CD4-positive, alpha-beta memory T cell (primary cell): ENCODE measurements at regions of chr16 and their contacts with region 1.

Region 1: DNA sequence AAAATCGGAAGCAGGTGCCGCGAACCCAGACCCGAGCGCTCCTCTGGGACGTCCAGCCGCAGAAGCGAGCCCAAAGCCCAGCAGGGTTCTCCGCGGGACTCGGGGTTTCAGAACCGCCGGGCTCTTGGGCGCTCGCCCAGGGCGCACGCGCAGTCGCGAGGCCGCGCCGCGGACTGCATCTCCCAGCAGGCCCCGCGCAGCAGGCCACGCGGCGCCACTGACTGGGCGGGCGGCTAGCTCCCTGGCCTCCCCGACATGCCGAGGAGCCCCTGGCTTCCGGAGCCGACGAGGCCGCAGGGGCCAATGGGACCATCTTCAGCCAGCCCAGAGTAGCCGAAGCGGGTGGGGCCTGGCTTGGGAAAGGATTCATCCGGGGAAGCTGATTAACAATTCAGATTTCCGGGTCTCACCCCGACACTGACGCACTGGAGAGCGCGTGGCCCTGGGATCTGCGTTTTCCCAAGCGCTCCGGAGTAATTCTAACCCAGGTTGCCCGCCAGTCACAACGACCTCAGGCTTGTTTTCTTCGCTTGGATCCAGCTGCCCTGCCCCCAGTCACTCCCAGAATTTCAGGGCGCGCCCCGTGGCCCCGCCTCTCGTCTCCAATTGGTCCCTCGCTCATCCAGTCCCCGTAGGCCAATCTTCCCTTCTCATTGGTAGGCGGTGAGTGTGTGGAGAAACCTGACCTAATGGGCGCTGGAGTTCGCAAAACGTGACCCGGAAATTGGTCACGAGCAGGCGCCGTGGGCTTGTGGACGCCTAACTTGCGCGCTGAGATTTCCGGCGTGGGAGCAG is at the start of gene ZNF263:
- DNase-seq: peak; percentile 92 to 97 (median 95)
- H3K4me3 ChIP-seq: peak within 1 kb of the TSS; percentile 66 to 68
- H3K4me3 Mint-ChIP-seq: peak within 1 kb of the TSS; percentile 93 to 97 (median 95)
- H3K27ac ChIP-seq: peak within 1 kb of the TSS; percentile 87
- H3K27ac Mint-ChIP-seq: peak within 1 kb of the TSS; percentile 93 to 99 (median 98)
- H3K4me1 ChIP-seq: peaks cover 27% of the 10 kb centered on the region
- H3K4me1 Mint-ChIP-seq: peaks cover 18 to 45% (median 30%) of the 10 kb centered on the region in 4 donors
- H3K27me3 ChIP-seq: no peaks in the 10 kb centered on the region
- H3K27me3 Mint-ChIP-seq: no peaks in the 10 kb centered on the region
- total RNA-seq, gene ZNF263: 44.0 to 45.1 TPM

Region 2: GRCh38 chr16:2673066-2673999 is 609.6 kb before region 1 on chr16:
- CTCF ChIA-PET with region 1: no interaction called
- POLR2A ChIA-PET with region 1: no interaction called
- intact Hi-C with region 1: no loop called
- DNase-seq: peak; percentile 94 to 98 (median 97)
- H3K4me3 ChIP-seq: peak overlapping the region; percentile 70 to 81
- H3K4me3 Mint-ChIP-seq: peak overlapping the region; percentile 84 to 90 (median 88)
- H3K27ac ChIP-seq: peak overlapping the region; percentile 80
- H3K27ac Mint-ChIP-seq: peak overlapping the region; percentile 82 to 92 (median 87)
- H3K4me1 ChIP-seq: peaks cover 21% of the 10 kb centered on the region
- H3K4me1 Mint-ChIP-seq: peaks cover 14 to 49% (median 26%) of the 10 kb centered on the region in 4 donors
- H3K27me3 ChIP-seq: no peaks in the 10 kb centered on the region
- H3K27me3 Mint-ChIP-seq: no peaks in the 10 kb centered on the region

Region 3: GRCh38 chr16:3158471-3159314 is 124.2 kb before region 1 on chr16:
- CTCF ChIA-PET with region 1: no interaction called
- POLR2A ChIA-PET with region 1: interaction called, 12 read pairs
- intact Hi-C with region 1: no loop called
- DNase-seq: peak; percentile 92 to 98 (median 94)
- H3K4me3 ChIP-seq: peak overlapping the region; percentile 65 to 66
- H3K4me3 Mint-ChIP-seq: peak overlapping the region; percentile 83 to 96 (median 92)
- H3K27ac ChIP-seq: peak overlapping the region; percentile 62
- H3K27ac Mint-ChIP-seq: peak overlapping the region; percentile 92 to 100 (median 96)
- H3K4me1 ChIP-seq: peaks cover 25% of the 10 kb centered on the region
- H3K4me1 Mint-ChIP-seq: peaks cover 11 to 36% (median 25%) of the 10 kb centered on the region in 4 donors
- H3K27me3 ChIP-seq: no peaks in the 10 kb centered on the region
- H3K27me3 Mint-ChIP-seq: peaks cover 0 to 2% of the 10 kb centered on the region in 2 donors

Region 4: DNA sequence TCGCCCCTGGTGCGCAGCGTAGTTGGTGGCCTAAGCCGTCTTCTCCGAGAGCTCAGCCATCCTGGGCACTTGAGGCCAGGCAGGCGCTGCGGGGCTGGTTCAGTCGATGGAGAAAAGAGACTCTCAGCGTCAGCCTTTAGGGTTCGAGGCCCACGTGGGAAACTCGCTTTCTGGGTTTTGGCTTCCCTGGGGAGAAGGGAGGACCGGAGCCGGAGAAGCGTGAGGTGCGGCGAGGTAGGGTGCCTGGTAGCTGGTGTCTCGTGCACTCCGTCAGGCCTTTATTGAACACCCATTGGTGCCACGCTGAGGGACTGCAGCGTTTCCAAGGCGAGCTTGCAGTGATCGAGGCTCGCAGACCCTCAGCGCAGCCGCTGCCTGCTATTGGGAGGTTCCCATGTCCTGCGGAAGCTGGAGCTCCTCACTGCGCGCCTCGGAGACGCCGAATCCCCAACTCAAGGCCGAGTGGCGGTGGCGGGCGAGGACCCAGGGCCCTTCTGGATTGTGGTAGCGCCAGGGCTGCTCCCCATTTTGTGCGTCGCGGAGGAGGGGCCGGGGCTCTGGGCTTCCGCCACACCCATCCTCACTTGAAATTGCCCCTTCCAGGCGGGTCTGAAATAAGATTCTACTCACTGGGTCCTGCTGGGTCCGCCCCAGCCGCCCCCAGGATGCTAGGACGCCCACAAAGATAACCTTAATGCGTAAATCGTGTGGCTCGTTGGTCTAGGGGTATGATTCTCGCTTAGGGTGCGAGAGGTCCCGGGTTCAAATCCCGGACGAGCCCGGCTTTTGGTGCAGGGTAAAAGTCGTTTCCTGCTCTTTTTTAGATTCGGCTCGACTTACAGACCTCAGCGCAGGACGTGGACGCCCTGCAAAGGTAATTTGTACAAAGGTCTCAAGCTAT is 93.8 kb before region 1 on chr16:
- CTCF ChIA-PET with region 1: no interaction called
- POLR2A ChIA-PET with region 1: interaction called, 10 read pairs
- intact Hi-C with region 1: loop called (anchors 5 kb)
- DNase-seq: peak in 3 of 5 donors; percentile 44 to 45 (median 44)
- H3K4me3 ChIP-seq: peak overlapping the region; percentile 23 to 44
- H3K4me3 Mint-ChIP-seq: peak overlapping the region; percentile 48 to 84 (median 82)
- H3K27ac ChIP-seq: no peak overlapping the region
- H3K27ac Mint-ChIP-seq: peak overlapping the region; percentile 42 to 90 (median 54)
- H3K4me1 ChIP-seq: peaks cover 44% of the 10 kb centered on the region
- H3K4me1 Mint-ChIP-seq: peaks cover 18 to 49% (median 32%) of the 10 kb centered on the region in 4 donors
- H3K27me3 ChIP-seq: peaks cover 58% of the 10 kb centered on the region
- H3K27me3 Mint-ChIP-seq: peaks cover 45 to 51% of the 10 kb centered on the region in 2 donors

Region 5: DNA sequence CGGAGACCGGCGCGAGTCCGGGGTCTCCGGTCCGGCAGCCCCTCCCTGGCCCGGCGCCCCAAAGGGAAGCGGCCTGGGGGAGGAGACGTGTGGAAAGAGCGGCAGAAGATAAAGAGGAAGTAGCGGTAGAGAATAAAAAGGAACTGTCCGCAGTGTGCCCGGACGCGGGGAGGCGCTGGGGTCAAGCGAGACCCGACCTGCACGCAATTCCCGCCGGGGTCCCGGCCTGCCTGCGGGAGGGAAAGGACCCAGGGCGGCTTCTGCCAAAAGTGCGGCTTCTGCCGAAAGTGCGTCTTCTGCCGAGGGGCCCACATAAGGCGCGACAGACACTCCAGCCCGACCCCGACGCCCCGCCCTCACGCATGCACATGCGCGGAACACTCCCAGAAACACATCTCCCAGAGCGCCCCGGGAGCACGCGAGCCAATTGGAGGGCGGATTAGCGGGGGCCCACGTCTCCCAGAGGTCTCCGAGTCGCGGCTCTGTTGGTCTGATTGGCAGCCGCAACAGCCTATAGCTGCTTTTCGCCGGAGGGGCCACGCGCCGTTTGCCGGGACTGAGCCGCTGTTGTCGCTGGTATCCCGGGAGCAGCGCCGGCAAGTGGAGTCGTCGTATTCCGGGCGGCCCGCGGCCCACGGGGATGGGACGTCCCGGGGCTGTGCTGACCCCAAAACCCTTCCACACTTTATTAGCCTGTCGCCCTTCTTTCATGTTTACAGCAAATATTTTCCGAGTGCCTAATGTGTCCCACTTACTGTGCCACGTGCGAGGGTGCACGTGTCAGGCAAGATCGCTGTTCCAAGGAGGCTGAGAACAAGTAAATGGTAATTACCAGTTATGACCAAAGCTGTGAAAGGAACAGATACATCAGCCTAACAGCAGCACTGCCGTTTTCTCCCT is 18.5 kb before region 1 on chr16:
- CTCF ChIA-PET with region 1: interaction called, 14 read pairs
- POLR2A ChIA-PET with region 1: interaction called, 80 read pairs
- intact Hi-C with region 1: loop called (anchors 1 kb)
- DNase-seq: peak; percentile 93 to 96 (median 95)
- H3K4me3 ChIP-seq: peak overlapping the region; percentile 12 to 95
- H3K4me3 Mint-ChIP-seq: peak overlapping the region; percentile 88 to 98 (median 90)
- H3K27ac ChIP-seq: peak overlapping the region; percentile 92
- H3K27ac Mint-ChIP-seq: peak overlapping the region; percentile 90 to 96 (median 93)
- H3K4me1 ChIP-seq: peaks cover 25% of the 10 kb centered on the region
- H3K4me1 Mint-ChIP-seq: peaks cover 23 to 46% (median 33%) of the 10 kb centered on the region in 4 donors
- H3K27me3 ChIP-seq: no peaks in the 10 kb centered on the region
- H3K27me3 Mint-ChIP-seq: no peaks in the 10 kb centered on the region

Region 6: GRCh38 chr16:3400779-3401688 is 118.1 kb after region 1 on chr16 and contains the starts of genes ZNF174 and ZSCAN32:
- CTCF ChIA-PET with region 1: no interaction called
- POLR2A ChIA-PET with region 1: interaction called, 66 read pairs
- intact Hi-C with region 1: loop called (anchors 1 kb)
- DNase-seq: peak; percentile 98 to 99 (median 99)
- H3K4me3 ChIP-seq: peak within 1 kb of the TSS; percentile 72 to 79
- H3K4me3 Mint-ChIP-seq: peak within 1 kb of the TSS; percentile 90 to 98 (median 94)
- H3K27ac ChIP-seq: peak within 1 kb of the TSS; percentile 69
- H3K27ac Mint-ChIP-seq: peak within 1 kb of the TSS; percentile 85 to 95 (median 90)
- H3K4me1 ChIP-seq: peaks cover 34% of the 10 kb centered on the region
- H3K4me1 Mint-ChIP-seq: peaks cover 36 to 68% (median 52%) of the 10 kb centered on the region in 4 donors
- H3K27me3 ChIP-seq: no peaks in the 10 kb centered on the region
- H3K27me3 Mint-ChIP-seq: no peaks in the 10 kb centered on the region
- total RNA-seq, gene ZNF174: 17.9 to 18.0 TPM
- total RNA-seq, gene ZSCAN32: 26.8 to 28.8 TPM

Region 7: DNA sequence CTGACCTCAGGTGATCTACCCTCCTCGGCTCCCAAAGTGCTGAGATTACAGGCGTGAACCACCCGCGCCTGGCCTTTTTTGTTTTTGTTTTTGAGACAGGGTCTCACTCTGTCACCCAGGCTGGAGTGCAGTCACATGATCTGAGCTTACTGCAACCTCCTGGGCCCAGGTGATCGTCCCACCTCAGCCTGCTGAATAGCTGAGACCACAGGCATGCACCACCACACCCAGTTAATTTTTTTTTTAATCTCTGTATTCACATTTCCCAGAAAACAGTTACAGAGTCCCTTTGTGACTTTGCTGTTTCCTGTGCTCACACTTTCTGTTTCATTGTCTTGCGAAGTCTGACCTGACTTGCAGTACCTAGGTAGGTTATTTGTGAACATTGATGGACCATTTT is 220.6 kb after region 1 on chr16:
- CTCF ChIA-PET with region 1: no interaction called
- POLR2A ChIA-PET with region 1: interaction called, 10 read pairs
- intact Hi-C with region 1: loop called (anchors 1 kb)
- DNase-seq: peak; percentile 61 to 76 (median 67)
- H3K4me3 ChIP-seq: peak overlapping the region in 1 of 2 donors; percentile 12
- H3K4me3 Mint-ChIP-seq: peak overlapping the region; percentile 68 to 84 (median 79)
- H3K27ac ChIP-seq: peak overlapping the region; percentile 4
- H3K27ac Mint-ChIP-seq: peak overlapping the region; percentile 88 to 95 (median 93)
- H3K4me1 ChIP-seq: peaks cover 65% of the 10 kb centered on the region
- H3K4me1 Mint-ChIP-seq: peaks cover 45 to 74% (median 55%) of the 10 kb centered on the region in 4 donors
- H3K27me3 ChIP-seq: no peaks in the 10 kb centered on the region
- H3K27me3 Mint-ChIP-seq: no peaks in the 10 kb centered on the region